GM12878 (cell line): ENCODE measurements at regions of chr11 and their contacts with region 1.

Region 1: DNA sequence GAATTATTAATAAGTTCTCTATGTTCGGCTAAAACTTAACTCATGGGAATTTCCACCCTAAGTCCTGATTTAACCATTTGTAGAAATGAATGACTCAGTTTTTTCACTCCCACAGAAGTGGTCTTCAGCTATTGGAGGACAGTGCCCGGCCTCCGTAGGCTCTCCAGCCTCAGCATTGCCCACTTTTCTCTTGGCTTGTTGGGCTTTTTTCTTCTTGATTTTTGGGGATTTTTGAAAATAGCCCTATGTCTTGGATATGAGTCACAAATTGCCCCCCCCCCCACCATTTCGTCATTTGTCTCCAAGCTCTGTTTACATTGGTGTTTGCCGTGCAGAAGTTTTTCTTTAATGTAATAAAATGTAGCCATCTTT is 66.7 kb downstream of the PACS1 start:
- DNase-seq: no peak
- ATAC-seq: peak; percentile 36
- H3K4me3 ChIP-seq: peak overlapping the region; percentile 42; the same call in 1 of the 2 replicates
- H3K27ac ChIP-seq: peak overlapping the region; percentile 85
- H3K4me1 ChIP-seq: peaks cover 69% of the 10 kb centered on the region
- H3K27me3 ChIP-seq: no peaks in the 10 kb centered on the region
- CTCF ChIP-seq: no peak
- EP300 ChIP-seq: peak in 1 of 2 experiments; percentile 9; a peak in 1 of 4 replicates
- POLR2A ChIP-seq: no peak
- RAD21 ChIP-seq: no peak

Region 2: DNA sequence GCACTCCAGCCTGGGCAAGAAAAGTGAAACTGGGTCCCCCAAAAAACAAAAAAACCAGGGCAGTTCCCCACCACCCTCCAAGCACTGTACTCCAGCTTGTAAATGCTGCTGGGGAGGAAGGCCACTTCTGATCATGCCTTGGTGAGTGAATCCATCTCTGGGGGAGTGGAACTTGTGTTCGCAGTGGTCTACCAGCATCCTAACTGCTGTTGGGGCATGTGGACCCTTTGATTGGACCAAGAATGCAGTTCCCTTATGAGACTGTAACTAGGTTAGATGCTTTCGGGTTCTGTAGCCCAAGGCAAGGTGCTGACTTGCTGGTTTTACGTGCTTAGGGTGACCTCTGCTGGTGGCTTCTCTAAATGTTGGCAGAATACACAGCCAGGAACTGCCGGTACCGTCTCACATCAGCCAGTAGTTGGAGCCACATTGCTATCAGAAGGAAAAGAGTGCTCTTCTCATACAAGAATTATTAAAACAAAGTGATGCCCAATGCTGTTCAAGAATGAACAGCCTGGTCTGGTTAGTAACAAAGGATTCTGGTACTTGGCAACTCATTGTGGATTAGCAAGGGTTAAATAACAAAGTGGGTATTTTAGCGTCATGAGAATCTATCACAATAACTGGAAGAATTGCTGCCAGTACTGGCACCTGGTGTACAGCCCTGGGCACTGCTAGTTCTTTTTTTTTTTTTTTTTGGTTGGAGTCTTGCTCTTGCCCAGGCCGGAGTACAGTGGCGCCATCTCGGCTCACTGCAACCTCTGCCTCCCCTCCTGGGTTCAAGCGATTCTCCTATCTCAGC is 147.7 kb before region 1 on chr11:
- CTCF ChIA-PET with region 1: interaction called, 13 read pairs
- POLR2A ChIA-PET with region 1: no interaction called
- RAD21 ChIA-PET with region 1: no interaction called
- SMC1A ChIA-PET with region 1: interaction called, 5 read pairs
- in situ Hi-C with region 1: no loop called
- intact Hi-C with region 1: loop called (anchors 1 kb)
- DNase-seq: peak; percentile 90
- ATAC-seq: peak; percentile 100
- H3K4me3 ChIP-seq: no peak overlapping the region
- H3K27ac ChIP-seq: no peak overlapping the region
- H3K4me1 ChIP-seq: no peaks in the 10 kb centered on the region
- H3K27me3 ChIP-seq: no peaks in the 10 kb centered on the region
- CTCF ChIP-seq: peak; percentile 92 to 100 (median 99); a peak in 5 of 6 replicates
- EP300 ChIP-seq: no peak
- POLR2A ChIP-seq: no peak; the same call in 1 of the 2 replicates
- RAD21 ChIP-seq: peak; percentile 94

Region 3: GRCh38 chr11:66045177-66045639 is 91.5 kb before region 1 on chr11:
- CTCF ChIA-PET with region 1: interaction called, 59 read pairs
- POLR2A ChIA-PET with region 1: interaction called, 4 read pairs
- RAD21 ChIA-PET with region 1: interaction called, 7 read pairs
- SMC1A ChIA-PET with region 1: interaction called, 24 read pairs
- in situ Hi-C with region 1: no loop called
- intact Hi-C with region 1: no loop called
- DNase-seq: no peak
- ATAC-seq: peak; percentile 98
- H3K4me3 ChIP-seq: no peak overlapping the region
- H3K27ac ChIP-seq: no peak overlapping the region
- H3K4me1 ChIP-seq: peaks cover 2% of the 10 kb centered on the region; the same call in 1 of the 2 replicates
- H3K27me3 ChIP-seq: no peaks in the 10 kb centered on the region
- CTCF ChIP-seq: peak; percentile 86 to 94 (median 89)
- EP300 ChIP-seq: no peak
- POLR2A ChIP-seq: no peak
- RAD21 ChIP-seq: peak; percentile 45

Region 4: GRCh38 chr11:66069715-66070603 is 66.8 kb before region 1 on chr11 and contains the start of gene PACS1:
- CTCF ChIA-PET with region 1: interaction called, 195 read pairs
- POLR2A ChIA-PET with region 1: interaction called, 56 read pairs
- RAD21 ChIA-PET with region 1: interaction called, 81 read pairs
- SMC1A ChIA-PET with region 1: interaction called, 130 read pairs
- in situ Hi-C with region 1: loop called (anchors 5 kb)
- intact Hi-C with region 1: loop called (anchors 1 kb)
- DNase-seq: no peak
- ATAC-seq: peak; percentile 61
- H3K4me3 ChIP-seq: peak within 1 kb of the TSS; percentile 94
- H3K27ac ChIP-seq: peak within 1 kb of the TSS; percentile 83
- H3K4me1 ChIP-seq: peaks cover 26% of the 10 kb centered on the region
- H3K27me3 ChIP-seq: no peaks in the 10 kb centered on the region
- CTCF ChIP-seq: no peak
- EP300 ChIP-seq: no peak
- POLR2A ChIP-seq: peak; percentile 68
- RAD21 ChIP-seq: no peak
- polyA plus RNA-seq, gene PACS1: 1.1 to 1.2 TPM

Region 5: DNA sequence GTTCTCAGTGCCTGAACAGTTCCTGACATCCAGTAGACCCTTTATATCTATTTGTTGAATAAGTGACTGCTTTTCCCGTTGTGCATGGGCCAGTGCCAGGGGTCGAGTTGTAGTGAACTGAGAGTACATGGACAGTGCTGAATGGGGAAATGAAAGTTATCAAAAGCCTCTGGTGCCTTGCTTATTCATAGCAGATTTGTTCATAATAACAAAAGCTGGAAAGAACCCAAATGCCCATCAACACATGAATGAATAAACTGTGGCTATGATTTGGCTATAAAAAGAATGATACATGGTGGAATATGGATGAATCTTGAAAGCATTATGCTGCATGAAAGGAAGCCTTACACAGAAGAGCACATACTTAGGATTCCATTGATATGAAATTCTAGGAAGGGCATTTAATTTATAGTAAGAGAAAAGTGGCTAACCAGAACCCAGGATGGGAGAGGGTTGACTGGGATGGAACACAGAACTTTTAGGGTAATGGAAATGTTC is 24.1 kb before region 1 on chr11:
- CTCF ChIA-PET with region 1: interaction called, 38 read pairs
- POLR2A ChIA-PET with region 1: interaction called, 91 read pairs
- RAD21 ChIA-PET with region 1: interaction called, 78 read pairs
- SMC1A ChIA-PET with region 1: interaction called, 161 read pairs
- in situ Hi-C with region 1: no loop called
- intact Hi-C with region 1: loop called (anchors 2 kb)
- DNase-seq: no peak
- ATAC-seq: peak; percentile 77
- H3K4me3 ChIP-seq: peak overlapping the region; percentile 45
- H3K27ac ChIP-seq: peak overlapping the region; percentile 88
- H3K4me1 ChIP-seq: peaks cover 72% of the 10 kb centered on the region
- H3K27me3 ChIP-seq: no peaks in the 10 kb centered on the region
- CTCF ChIP-seq: no peak
- EP300 ChIP-seq: peak; percentile 80 to 90; a peak in 3 of 4 replicates
- POLR2A ChIP-seq: no peak
- RAD21 ChIP-seq: no peak

Region 6: GRCh38 chr11:66151273-66151672 is 14.5 kb after region 1 on chr11:
- CTCF ChIA-PET with region 1: interaction called, 14 read pairs
- POLR2A ChIA-PET with region 1: interaction called, 12 read pairs
- RAD21 ChIA-PET with region 1: interaction called, 21 read pairs
- SMC1A ChIA-PET with region 1: interaction called, 27 read pairs
- in situ Hi-C with region 1: no loop called
- intact Hi-C with region 1: no loop called
- DNase-seq: no peak
- ATAC-seq: no peak
- H3K4me3 ChIP-seq: no peak overlapping the region
- H3K27ac ChIP-seq: peak overlapping the region; percentile 31
- H3K4me1 ChIP-seq: peaks cover 27% of the 10 kb centered on the region
- H3K27me3 ChIP-seq: no peaks in the 10 kb centered on the region
- CTCF ChIP-seq: no peak
- EP300 ChIP-seq: no peak
- POLR2A ChIP-seq: no peak
- RAD21 ChIP-seq: no peak

Region 7: DNA sequence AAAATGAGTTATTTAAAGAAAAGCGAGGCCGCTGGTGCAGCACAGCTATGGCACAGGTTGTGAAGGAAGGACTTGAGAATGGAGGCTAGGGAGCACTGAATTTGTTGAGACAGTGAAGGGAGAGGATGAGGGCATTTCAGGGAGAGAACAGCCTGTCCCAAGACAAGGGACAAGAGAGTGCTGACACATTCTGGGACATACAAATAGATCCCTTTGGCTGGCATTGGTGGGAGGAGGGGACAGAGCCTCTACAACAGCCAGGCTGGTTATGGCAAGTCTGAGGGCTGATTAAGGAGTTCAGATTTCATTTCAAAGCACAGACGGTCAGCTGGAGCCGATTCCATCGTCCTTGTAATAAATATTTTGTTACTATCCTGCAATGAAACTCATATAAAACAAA is 236.5 kb after region 1 on chr11:
- CTCF ChIA-PET with region 1: no interaction called
- POLR2A ChIA-PET with region 1: no interaction called
- RAD21 ChIA-PET with region 1: no interaction called
- SMC1A ChIA-PET with region 1: no interaction called
- in situ Hi-C with region 1: no loop called
- intact Hi-C with region 1: no loop called
- DNase-seq: no peak
- ATAC-seq: no peak
- H3K4me3 ChIP-seq: no peak overlapping the region
- H3K27ac ChIP-seq: no peak overlapping the region
- H3K4me1 ChIP-seq: peaks cover 4% of the 10 kb centered on the region; the same call in 1 of the 2 replicates
- H3K27me3 ChIP-seq: no peaks in the 10 kb centered on the region; a peak in 1 of 4 replicates
- CTCF ChIP-seq: no peak
- EP300 ChIP-seq: no peak
- POLR2A ChIP-seq: no peak
- RAD21 ChIP-seq: no peak